Calu3 (cell line): ENCODE measurements at regions of chr14 and their contacts with region 1.

Region 1: GRCh38 chr14:24366721-24367513 is 1.1 kb upstream of the NFATC4 start:
- DNase-seq: peak; percentile 93
- H3K4me3 Mint-ChIP-seq: peak overlapping the region; percentile 66
- H3K27ac Mint-ChIP-seq: peak overlapping the region; percentile 69
- H3K4me1 Mint-ChIP-seq: peaks cover 11% of the 10 kb centered on the region
- H3K27me3 Mint-ChIP-seq: no peaks in the 10 kb centered on the region
- CTCF ChIP-seq: no peak

Region 2: DNA sequence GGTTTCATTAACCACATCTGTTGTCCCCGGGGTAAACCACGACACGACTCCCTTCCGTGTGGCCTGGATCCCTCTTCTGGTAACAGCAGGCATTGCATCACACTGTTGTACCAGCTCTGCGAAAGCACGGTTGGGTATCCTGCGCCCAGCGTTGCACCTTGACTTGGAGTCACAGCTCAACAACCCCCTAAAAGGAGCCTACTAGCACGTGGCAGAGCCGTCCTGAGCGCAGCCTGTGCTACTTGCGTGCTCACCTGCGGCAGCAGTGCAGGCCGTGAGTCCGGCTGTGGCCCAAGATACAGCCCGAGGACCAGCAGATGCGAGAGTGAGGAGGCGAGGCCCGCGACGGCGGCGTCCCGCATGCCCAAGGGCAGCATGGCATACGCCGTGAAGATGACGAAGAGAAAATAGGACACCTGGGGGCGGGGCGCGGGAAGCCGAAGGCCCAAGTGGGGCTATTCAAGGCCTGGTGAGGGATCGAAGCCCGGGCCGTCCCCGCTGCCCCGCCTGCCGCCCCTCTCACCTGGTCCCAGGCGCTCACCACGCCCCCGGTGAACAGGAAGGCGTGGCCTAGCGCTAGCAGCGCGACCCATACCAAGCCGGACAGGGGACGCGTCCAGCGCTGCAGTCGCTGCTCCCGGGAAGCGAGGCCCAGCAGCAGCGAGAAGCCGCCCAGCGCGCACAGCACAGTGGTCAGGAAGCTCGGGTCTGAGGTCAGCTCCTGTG is 34.5 kb before region 1 on chr14:
- CTCF ChIA-PET with region 1: interaction called, 14 read pairs
- intact Hi-C with region 1: loop called (anchors 5 kb)
- DNase-seq: peak; percentile 79
- H3K4me3 Mint-ChIP-seq: peak overlapping the region; percentile 72
- H3K27ac Mint-ChIP-seq: peak overlapping the region; percentile 52
- H3K4me1 Mint-ChIP-seq: peaks cover 32% of the 10 kb centered on the region
- H3K27me3 Mint-ChIP-seq: no peaks in the 10 kb centered on the region
- CTCF ChIP-seq: peak; percentile 54

Region 3: DNA sequence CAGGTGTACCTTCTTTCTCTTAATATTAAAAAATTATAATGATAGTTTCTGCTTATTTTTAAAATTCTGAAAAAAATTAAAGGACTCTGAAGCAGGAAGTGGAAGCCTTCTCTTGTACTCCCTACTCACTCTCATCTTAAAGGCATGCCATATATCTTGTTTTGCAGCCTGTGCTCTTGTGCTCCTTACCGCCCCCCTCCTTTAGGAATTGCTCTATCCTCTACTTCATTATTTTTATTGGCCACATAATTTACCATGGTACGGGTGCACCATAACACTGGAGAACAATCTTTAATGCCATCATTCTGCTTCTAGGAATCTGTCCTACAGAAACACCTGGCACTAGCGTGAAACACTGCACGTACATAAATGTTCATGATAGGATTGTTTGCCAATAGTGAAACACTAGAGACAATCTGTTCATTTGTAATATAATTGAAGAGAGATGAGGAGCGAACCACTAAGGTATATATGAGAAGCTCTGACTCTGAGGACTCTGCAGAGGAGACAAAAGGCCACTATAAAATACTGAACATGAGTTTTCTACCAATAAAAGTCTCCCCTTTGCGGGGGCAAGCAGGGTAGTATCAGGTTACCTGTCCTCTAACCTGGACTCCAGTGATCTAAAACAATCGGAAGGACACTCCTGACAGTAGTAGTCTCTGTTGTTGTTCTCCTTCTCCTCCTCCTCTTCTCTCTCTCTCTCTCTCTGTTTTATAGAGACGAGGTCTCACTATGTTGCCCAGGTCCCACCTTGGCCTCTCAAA is 25.6 kb after region 1 on chr14:
- CTCF ChIA-PET with region 1: interaction called, 6 read pairs
- intact Hi-C with region 1: loop called (anchors 1 kb)
- DNase-seq: peak; percentile 71
- H3K4me3 Mint-ChIP-seq: peak overlapping the region; percentile 55
- H3K27ac Mint-ChIP-seq: peak overlapping the region; percentile 95
- H3K4me1 Mint-ChIP-seq: peaks cover 47% of the 10 kb centered on the region
- H3K27me3 Mint-ChIP-seq: no peaks in the 10 kb centered on the region
- CTCF ChIP-seq: no peak

Region 4: DNA sequence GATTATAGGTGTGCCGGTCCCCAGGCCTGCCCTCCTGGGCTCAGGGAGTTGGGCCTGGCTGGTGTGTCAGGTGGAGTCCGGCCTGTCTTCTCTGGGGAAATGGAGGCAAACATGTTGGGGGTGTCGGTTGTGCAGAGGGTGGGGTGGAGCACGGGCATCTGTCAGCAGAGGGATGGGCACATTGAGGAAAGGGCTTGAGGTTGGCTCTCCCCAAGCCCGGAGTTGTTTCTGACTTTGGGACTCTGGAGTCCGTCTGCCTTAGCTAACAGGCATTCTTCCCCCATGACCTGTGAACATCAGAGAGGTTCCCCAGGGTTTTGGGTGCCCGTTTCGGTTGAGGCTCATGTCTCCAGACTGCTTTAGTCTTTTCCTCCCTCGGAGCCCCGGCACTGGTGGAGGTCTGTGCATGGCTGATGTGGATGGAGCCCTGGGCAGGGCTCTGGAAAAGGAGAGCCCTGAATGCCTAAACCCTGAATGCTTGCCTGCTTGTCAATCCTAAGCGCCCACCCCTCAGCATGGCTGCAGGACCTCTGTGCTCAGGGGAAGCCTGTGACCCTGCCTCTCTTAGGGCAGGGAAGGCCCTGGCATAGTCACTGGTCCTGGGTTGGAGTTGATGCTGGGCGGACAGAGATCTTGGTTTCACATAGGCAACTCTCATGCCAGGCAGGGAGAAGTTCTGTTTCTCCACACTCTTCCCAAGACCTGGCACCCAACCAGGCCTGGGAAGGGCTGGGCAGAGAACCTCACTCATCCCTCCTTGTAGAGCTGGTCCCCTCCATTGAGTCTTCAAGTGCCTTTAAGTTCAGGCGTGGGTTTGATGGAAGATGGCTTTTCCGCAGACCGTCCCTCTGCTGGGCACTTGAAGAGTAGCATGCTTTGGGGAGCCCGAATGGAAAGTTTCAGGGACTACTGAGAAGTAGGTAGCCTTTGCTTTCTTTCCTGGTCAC is 44.8 kb after region 1 on chr14:
- CTCF ChIA-PET with region 1: interaction called, 12 read pairs
- intact Hi-C with region 1: loop called (anchors 1 kb)
- DNase-seq: peak; percentile 52
- H3K4me3 Mint-ChIP-seq: no peak overlapping the region
- H3K27ac Mint-ChIP-seq: no peak overlapping the region
- H3K4me1 Mint-ChIP-seq: no peaks in the 10 kb centered on the region
- H3K27me3 Mint-ChIP-seq: no peaks in the 10 kb centered on the region
- CTCF ChIP-seq: peak; percentile 45

Region 5: DNA sequence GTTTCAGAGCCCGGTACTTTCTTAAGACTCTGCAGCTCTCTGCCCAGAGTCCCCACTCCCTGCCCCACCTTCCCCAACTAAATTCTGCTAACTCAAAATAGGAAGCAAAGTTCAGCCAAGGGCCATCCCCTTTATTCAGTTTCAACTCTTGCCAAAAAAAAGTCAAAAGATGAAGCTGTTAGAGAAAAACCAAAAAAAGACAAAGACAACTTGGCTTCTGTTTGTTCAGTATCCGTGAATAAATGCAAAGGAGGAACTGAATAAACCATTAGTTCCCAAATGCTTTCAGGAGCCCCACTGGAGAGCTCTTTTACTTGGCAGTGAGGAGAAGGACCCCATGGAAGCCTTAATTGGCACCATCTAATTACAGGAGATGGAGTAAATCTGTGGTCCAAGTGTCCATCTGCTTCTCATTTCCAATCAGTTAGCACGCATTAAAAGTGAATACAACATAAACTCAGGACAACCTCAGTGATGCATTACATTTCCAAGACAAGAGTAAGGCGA is 422.5 kb after region 1 on chr14:
- CTCF ChIA-PET with region 1: no interaction called
- intact Hi-C with region 1: no loop called
- DNase-seq: no peak
- H3K4me3 Mint-ChIP-seq: no peak overlapping the region
- H3K27ac Mint-ChIP-seq: no peak overlapping the region
- H3K4me1 Mint-ChIP-seq: no peaks in the 10 kb centered on the region
- H3K27me3 Mint-ChIP-seq: peaks cover 20% of the 10 kb centered on the region
- CTCF ChIP-seq: no peak